ENCODE measurements at regions of chr1 and their contacts with region 1.

Region 1: DNA sequence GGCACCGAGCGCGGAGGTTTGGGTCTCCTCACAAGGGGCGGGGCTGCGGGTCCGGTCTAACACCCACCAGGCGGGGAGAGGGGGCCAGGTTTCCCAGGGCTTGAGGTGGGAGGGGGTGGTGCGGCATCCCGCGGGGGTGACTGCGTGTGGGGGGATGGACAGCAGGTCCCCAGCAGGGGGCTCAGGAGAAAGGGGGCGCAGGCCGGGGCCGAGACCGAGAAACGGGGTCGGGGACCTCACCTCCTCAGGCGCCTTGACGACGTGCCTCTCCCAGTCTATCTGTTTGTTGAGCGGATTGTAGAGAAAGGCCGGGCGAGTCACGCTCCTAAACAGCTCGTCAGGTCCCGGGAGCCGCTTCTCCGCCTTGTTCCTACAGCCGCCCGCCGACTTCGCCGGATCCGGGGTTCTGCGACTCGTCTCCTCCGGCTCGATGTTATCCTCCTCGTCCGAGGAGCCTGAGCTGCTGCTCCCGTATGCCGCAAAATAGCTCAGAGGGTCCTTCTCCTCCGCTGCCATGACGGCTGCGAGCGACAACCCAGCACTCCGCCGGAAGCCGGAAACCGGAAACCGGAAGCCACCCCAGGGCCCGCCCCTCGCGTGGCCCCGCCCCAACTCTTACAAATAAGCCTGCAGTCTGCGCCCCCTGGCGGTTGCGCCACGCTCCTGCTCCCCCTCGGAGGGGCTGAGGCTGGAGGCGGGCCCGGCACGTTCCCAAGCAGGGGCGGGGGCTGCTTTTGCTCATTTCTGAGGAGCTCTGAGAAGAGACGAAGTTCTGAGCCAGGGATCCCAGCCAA is at the start of gene C1orf52:
- DNase-seq: peak; percentile 98
- ATAC-seq: peak; percentile 99
- H3K4me3 ChIP-seq: peak within 1 kb of the TSS; percentile 82
- H3K27ac ChIP-seq: peak within 1 kb of the TSS; percentile 86
- H3K4me1 ChIP-seq: peaks cover 28% of the 10 kb centered on the region
- H3K27me3 ChIP-seq: no peaks in the 10 kb centered on the region
- CTCF ChIP-seq: peak; percentile 100
- total RNA-seq, gene C1orf52: 22.5 TPM

Region 2: DNA sequence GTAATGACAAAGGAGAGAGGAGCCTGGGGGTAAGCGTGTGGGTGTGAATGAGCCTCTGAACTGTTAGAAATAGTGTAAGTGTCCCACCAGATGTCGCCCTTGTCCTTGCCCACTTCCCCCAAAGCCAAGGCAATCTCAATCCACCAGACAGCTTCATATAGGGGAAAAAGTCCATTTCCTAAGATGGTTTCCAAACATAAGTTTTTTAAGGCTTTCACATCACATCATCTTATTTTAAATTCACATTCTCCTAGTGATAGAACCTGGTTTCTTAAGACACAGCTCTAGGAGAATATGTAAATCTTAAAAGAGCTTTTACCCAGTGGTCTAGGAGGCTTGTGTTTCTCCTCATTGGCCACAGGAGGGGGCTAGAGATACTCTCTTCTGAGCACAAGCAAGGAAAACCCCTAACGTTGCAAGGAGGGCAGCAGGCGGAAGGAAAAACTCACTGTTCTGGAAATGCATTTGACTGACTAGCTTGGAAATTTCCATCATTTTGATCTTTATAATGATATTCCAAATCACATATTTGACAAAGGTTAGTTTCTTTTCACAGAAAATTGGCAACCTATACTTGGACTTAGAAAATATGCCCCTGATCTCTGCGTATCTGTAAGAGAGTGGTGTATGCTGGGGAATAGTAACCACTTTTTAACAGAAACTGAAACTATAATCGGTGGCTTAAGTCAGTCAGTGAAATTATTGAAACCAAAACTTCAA is 314.4 kb before region 1 on chr1:
- intact Hi-C with region 1: loop called (anchors 10 kb)
- DNase-seq: no peak
- ATAC-seq: peak; percentile 98
- H3K4me3 ChIP-seq: peak overlapping the region; percentile 56
- H3K27ac ChIP-seq: peak overlapping the region; percentile 80
- H3K4me1 ChIP-seq: peaks cover 12% of the 10 kb centered on the region
- H3K27me3 ChIP-seq: no peaks in the 10 kb centered on the region
- CTCF ChIP-seq: peak; percentile 95

Region 3: DNA sequence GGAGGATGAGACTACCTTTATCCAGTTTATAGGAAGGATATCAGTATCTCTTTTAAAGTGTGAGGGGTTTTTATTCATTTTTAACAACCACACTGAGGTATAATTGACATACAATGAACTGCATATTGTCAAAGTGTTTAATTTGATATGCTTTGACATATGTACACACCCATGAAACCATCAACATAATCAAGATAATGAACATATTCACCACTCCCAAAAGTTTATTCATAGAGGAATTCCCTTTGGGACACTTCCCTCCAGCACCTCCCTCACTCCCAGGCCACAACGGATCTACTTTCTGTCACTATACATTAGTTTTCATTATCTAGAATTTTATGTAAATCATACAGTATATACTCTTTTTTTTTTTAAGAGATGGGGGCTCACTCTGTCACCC is 147.6 kb before region 1 on chr1:
- intact Hi-C with region 1: loop called (anchors 5 kb)
- DNase-seq: no peak
- ATAC-seq: no peak
- H3K4me3 ChIP-seq: no peak overlapping the region
- H3K27ac ChIP-seq: no peak overlapping the region
- H3K4me1 ChIP-seq: no peaks in the 10 kb centered on the region
- H3K27me3 ChIP-seq: no peaks in the 10 kb centered on the region
- CTCF ChIP-seq: no peak

Region 4: DNA sequence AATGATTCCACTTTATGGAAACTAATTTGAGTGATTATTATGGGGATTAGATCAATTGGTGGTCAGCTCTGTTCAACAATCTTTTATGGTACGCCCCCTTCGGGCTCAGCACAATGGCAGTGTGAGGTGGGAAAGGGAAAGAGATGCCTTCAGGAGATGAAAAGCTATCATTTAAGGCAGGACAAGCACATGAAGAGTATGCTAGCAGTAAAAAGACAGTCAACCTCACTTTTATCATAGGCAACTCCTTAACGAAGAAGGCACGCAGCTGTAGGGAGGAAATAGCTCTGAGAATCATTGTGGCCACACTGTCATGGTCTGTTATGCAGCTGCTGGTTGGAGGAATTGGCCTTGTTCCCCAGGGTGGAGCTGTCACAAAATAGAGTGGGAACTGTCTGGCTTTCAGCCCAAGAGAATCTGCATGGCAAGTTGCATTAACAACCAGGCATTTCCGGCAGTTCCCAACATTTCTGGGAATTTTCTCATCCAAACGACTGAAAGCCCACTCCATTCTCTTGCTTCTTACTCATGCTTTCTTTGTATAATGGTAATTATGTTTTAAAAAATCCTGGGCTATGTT is 71.5 kb after region 1 on chr1:
- intact Hi-C with region 1: no loop called
- DNase-seq: no peak
- ATAC-seq: peak; percentile 36
- H3K4me3 ChIP-seq: no peak overlapping the region
- H3K27ac ChIP-seq: peak overlapping the region; percentile 78
- H3K4me1 ChIP-seq: peaks cover 31% of the 10 kb centered on the region
- H3K27me3 ChIP-seq: no peaks in the 10 kb centered on the region
- CTCF ChIP-seq: no peak

Measured in upper lobe of right lung (tissue), 1 donor.